ENCODE measurements at regions of chr4 and their contacts with region 1.

Region 1: DNA sequence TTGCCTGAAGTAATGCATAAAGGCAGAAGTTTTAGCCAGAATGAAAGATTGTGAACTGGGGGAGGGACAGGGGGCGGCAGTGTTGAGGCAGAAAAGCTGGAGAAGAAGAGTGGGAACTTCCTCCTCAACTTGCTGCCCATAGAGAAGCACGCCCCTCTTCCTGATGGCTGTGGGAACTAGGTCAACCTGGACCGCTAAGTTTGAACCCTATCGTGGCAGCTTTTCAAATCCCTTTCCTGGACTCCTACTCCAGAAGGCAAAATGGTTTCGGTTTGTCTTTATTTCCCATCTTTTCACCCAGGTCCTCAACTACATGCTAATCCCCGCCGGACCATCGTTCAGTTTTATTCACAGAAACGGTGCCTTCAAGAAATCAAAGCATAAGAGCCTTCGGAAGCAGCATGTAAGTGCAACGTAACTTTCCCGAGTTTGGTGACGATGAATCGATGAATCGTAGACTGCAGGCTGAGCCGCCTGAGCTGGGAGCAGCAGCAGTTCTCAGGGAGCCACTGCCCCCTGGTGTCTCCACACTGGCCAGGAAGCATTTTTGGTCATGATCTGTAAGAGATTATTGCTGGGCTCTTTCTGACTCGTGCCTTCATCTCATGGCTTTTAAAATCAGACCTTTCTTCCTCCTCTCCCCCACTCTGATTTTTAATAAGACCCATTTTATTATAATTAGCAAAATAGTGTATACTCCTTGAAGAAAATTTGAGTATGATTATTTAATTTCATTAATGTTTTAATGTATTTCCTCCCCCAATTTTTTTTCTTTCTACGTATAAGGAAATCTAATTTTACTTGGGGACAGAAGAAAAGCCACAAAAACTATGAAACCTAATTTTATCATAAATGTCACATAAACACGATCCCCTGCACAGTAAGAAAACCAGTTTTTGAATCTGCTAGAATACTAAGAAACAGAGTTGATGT is 21.4 kb downstream of the SPINK2 start:
- DNase-seq: peak; percentile 81 to 94 (median 92)
- ATAC-seq: peak; percentile 99
- H3K4me3 ChIP-seq: peak overlapping the region; percentile 66
- H3K27ac ChIP-seq: peak overlapping the region; percentile 5
- H3K4me1 ChIP-seq: no peaks in the 10 kb centered on the region
- H3K27me3 ChIP-seq: no peaks in the 10 kb centered on the region

Region 2: DNA sequence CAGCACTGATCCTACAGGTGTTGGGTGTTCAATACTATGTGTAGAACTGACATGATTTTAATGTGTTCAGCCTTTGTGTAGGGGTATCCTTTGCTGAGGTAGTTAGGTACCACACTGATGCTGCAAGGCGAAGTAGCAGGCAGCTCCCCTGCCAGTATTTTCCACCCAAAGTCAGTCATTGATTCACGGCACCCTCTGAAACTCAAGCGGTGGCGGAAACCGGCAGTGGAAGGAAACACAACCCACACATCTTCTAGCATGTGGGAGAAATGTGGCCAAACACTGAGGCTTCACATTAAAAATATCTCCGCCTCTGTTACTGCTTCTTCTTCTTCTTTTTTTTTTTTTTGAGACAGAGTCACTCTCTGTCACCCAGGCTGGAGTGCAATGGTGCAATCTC is 539.1 kb before region 1 on chr4:
- intact Hi-C with region 1: no loop called
- DNase-seq: no peak
- ATAC-seq: no peak
- H3K4me3 ChIP-seq: no peak overlapping the region
- H3K27ac ChIP-seq: no peak overlapping the region
- H3K4me1 ChIP-seq: no peaks in the 10 kb centered on the region
- H3K27me3 ChIP-seq: no peaks in the 10 kb centered on the region

Region 3: DNA sequence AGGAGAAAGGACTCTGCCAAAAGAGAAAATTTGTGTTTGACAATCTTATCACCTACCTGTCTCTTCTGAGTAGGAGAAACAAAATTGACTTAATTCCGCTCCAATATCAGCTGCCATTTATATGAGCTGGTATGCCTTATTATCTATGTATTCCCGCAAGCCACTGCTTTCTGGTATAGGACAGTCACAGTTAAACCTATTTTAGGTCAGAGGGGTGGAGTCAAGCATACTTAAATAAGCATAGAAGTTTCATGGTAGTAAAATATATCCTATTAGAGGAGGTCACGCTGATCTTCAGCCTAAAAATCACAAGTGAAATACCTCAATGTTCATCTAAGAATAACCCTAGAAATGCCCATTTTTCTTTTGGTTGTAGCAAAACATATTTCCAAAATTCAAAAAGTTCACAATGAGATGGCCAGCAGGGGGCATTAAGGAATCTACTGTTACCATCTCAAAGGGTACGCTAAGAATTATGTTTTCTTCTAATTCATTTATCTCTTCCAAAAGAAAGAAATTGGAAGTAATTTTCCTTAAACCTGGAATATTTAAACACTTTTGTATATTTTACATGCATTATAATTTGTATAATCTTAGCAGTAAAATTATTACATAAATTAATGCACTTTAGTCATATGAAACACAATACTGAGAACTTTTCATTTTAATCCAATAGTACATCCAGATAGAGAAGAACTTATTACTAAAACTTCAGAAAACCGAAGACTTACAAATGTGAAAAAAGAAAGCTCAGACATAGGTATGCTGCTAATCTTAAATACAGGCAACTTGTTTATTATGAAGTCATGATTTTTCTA is 375.2 kb before region 1 on chr4:
- intact Hi-C with region 1: loop called in 1 of 4 experiments (anchors 10 kb)
- DNase-seq: no peak
- ATAC-seq: no peak
- H3K4me3 ChIP-seq: peak overlapping the region; percentile 48
- H3K27ac ChIP-seq: no peak overlapping the region
- H3K4me1 ChIP-seq: no peaks in the 10 kb centered on the region
- H3K27me3 ChIP-seq: no peaks in the 10 kb centered on the region

Region 4: GRCh38 chr4:56570041-56570440 is 230.0 kb before region 1 on chr4:
- intact Hi-C with region 1: loop called in 3 of 4 experiments (anchors 5 kb)
- DNase-seq: no peak
- ATAC-seq: no peak
- H3K4me3 ChIP-seq: no peak overlapping the region
- H3K27ac ChIP-seq: no peak overlapping the region
- H3K4me1 ChIP-seq: no peaks in the 10 kb centered on the region
- H3K27me3 ChIP-seq: no peaks in the 10 kb centered on the region

Region 5: DNA sequence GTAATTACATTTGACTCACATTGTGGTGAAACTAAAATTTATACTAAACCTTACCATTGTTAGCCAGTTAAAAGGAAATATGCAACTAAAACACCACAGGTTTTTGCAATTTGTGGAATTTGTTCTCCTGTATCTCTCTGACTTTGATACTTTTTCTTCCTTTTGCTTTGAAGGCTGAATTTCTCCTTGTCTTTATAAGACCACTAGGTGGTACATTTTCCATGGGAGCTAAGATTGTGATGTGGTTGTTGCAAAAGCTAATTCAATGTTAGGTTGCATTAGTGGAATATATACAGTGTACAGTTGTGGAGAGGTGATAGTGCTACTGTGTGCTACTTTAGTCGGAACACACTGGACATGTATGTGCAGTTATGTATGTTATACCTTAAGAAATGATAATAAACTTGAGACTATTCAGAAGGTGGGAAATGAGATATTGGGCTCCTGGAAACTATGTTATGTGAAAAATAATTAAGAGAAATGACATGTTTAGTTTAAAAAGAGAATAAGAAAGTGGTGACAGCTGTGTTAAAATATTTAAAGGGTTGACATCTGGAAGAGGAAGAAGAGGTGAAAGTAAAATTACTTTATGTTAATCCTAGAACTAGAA is 224.2 kb before region 1 on chr4:
- intact Hi-C with region 1: loop called in 3 of 4 experiments (anchors 5 kb)
- DNase-seq: no peak
- ATAC-seq: no peak
- H3K4me3 ChIP-seq: no peak overlapping the region
- H3K27ac ChIP-seq: no peak overlapping the region
- H3K4me1 ChIP-seq: no peaks in the 10 kb centered on the region
- H3K27me3 ChIP-seq: no peaks in the 10 kb centered on the region

Region 6: GRCh38 chr4:56655209-56655626 is 144.9 kb before region 1 on chr4:
- intact Hi-C with region 1: loop called in 1 of 4 experiments (anchors 10 kb)
- DNase-seq: peak; percentile 15 to 72 (median 63)
- ATAC-seq: peak; percentile 63 to 70
- H3K4me3 ChIP-seq: peak overlapping the region; percentile 61
- H3K27ac ChIP-seq: no peak overlapping the region
- H3K4me1 ChIP-seq: no peaks in the 10 kb centered on the region
- H3K27me3 ChIP-seq: no peaks in the 10 kb centered on the region